CD4-positive, alpha-beta memory T cell (primary cell): ENCODE measurements at regions of chr16 and their contacts with region 1.

Region 1: GRCh38 chr16:80824718-80825364 is 20.4 kb upstream of the CDYL2 start:
- DNase-seq: peak; percentile 32 to 46 (median 44)
- H3K4me3 ChIP-seq: no peak overlapping the region
- H3K4me3 Mint-ChIP-seq: no peak overlapping the region
- H3K27ac ChIP-seq: no peak overlapping the region
- H3K27ac Mint-ChIP-seq: no peak overlapping the region
- H3K4me1 ChIP-seq: no peaks in the 10 kb centered on the region
- H3K4me1 Mint-ChIP-seq: peaks cover 0 to 2% (median 0%) of the 10 kb centered on the region in 4 donors
- H3K27me3 ChIP-seq: peaks cover 3% of the 10 kb centered on the region
- H3K27me3 Mint-ChIP-seq: peaks cover 2 to 4% of the 10 kb centered on the region in 2 donors

Region 2: DNA sequence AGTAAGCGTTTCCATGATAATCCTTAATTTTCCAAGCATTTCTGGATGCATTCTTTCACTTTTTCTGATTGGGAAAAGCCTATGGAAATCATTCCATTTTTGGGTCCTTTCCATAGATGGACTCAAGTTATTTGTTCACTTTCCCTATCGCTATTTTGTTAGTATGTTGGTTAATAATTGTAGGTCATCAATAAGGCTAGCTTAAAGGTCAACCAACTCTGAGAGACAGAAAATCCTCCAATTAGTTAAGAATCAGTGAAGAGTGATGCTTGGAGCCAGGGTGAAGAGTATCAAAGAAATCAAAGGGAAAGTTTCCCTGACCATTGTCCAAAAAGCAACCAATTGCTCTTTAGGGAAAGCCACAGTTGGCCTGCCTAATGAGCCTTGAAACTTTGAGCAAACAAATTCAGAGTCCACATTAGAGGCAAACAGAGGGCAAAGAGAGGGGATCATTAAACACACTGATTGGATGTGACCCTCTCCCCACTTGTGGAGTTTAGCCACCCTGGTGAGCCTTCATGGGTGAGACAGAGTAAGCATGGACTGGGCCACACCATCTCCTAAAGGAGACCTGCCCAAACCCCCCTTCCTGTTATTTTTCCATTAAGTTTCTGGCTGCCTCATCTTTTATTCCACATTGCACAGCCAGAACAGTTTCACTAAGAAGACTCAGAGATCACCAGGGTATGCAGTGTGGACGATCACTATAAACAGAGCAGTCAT is 417.4 kb before region 1 on chr16:
- CTCF ChIA-PET with region 1: no interaction called
- POLR2A ChIA-PET with region 1: no interaction called
- intact Hi-C with region 1: loop called (anchors 10 kb)
- DNase-seq: no peak
- H3K4me3 ChIP-seq: no peak overlapping the region
- H3K4me3 Mint-ChIP-seq: no peak overlapping the region
- H3K27ac ChIP-seq: no peak overlapping the region
- H3K27ac Mint-ChIP-seq: no peak overlapping the region
- H3K4me1 ChIP-seq: no peaks in the 10 kb centered on the region
- H3K4me1 Mint-ChIP-seq: no peaks in the 10 kb centered on the region
- H3K27me3 ChIP-seq: no peaks in the 10 kb centered on the region
- H3K27me3 Mint-ChIP-seq: peaks cover 13 to 26% of the 10 kb centered on the region in 2 donors

Region 3: DNA sequence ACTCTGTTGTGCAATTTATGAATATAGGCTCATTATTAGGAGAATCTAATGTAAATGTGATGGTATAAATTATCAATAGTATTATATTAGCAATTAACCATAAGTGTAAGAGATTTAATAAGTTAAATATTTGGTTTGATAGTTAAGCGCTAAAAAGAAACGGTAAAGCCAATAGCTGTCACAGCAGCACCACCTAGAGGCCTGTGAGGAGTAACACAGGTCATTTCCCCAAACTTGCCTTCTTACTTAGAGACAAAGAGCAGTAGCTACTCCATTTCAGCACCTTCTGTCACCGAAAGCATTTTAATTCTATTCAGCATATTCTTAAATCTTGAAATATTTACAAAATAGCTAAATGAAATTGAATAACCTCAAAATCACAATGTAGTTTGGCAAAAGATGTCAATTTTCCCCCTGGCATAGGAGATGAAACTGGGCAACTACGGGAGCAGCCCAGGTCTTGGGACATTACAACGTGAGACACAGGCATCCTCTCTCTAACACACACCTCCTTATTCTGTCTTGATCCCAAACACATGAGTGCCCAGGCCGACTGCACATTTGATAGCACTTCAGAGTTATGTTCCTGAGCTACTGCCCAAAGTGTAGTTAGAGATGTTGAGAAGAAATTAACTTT is 298.3 kb before region 1 on chr16:
- CTCF ChIA-PET with region 1: interaction called, 60 read pairs
- POLR2A ChIA-PET with region 1: interaction called, 3 read pairs
- intact Hi-C with region 1: loop called (anchors 1 kb)
- DNase-seq: peak; percentile 53 to 66 (median 62)
- H3K4me3 ChIP-seq: no peak overlapping the region
- H3K4me3 Mint-ChIP-seq: no peak overlapping the region
- H3K27ac ChIP-seq: no peak overlapping the region
- H3K27ac Mint-ChIP-seq: peak overlapping the region in 1 of 7 donors; percentile 18
- H3K4me1 ChIP-seq: peaks cover 6% of the 10 kb centered on the region
- H3K4me1 Mint-ChIP-seq: peaks cover 0 to 4% (median 2%) of the 10 kb centered on the region in 4 donors
- H3K27me3 ChIP-seq: no peaks in the 10 kb centered on the region
- H3K27me3 Mint-ChIP-seq: no peaks in the 10 kb centered on the region